CD8-positive, alpha-beta T cell (primary cell): ENCODE measurements at regions of chr1 and their contacts with region 1.

Region 1: GRCh38 chr1:236795035-236795756 is at the start of gene MTR:
- DNase-seq: peak; percentile 90 to 98 (median 95)
- ATAC-seq: peak; percentile 88
- H3K4me3 ChIP-seq: peak within 1 kb of the TSS; percentile 59 to 88
- H3K4me3 Mint-ChIP-seq: peak within 1 kb of the TSS; percentile 90
- H3K27ac ChIP-seq: peak within 1 kb of the TSS; percentile 95 to 97
- H3K27ac Mint-ChIP-seq: peak within 1 kb of the TSS; percentile 98
- H3K4me1 ChIP-seq: peaks cover 25% of the 10 kb centered on the region
- H3K4me1 Mint-ChIP-seq: peaks cover 46% of the 10 kb centered on the region
- H3K27me3 ChIP-seq: no peaks in the 10 kb centered on the region
- H3K27me3 Mint-ChIP-seq: peaks cover 2% of the 10 kb centered on the region
- CTCF ChIP-seq: no peak
- total RNA-seq, gene MTR: 32.9 to 35.0 TPM

Region 2: GRCh38 chr1:236281654-236282424 is 513.4 kb before region 1 on chr1 and contains the start of gene ERO1B:
- CTCF ChIA-PET with region 1: interaction called, 3 read pairs
- POLR2A ChIA-PET with region 1: interaction called, 3 read pairs
- intact Hi-C with region 1: loop called in 1 of 2 experiments (anchors 5 kb)
- DNase-seq: peak; percentile 96 to 99 (median 97)
- ATAC-seq: peak; percentile 93
- H3K4me3 ChIP-seq: peak within 1 kb of the TSS; percentile 75 to 90
- H3K4me3 Mint-ChIP-seq: peak within 1 kb of the TSS; percentile 97
- H3K27ac ChIP-seq: peak within 1 kb of the TSS; percentile 72 to 85
- H3K27ac Mint-ChIP-seq: peak within 1 kb of the TSS; percentile 92
- H3K4me1 ChIP-seq: peaks cover 28% of the 10 kb centered on the region
- H3K4me1 Mint-ChIP-seq: peaks cover 52% of the 10 kb centered on the region
- H3K27me3 ChIP-seq: no peaks in the 10 kb centered on the region
- H3K27me3 Mint-ChIP-seq: no peaks in the 10 kb centered on the region
- CTCF ChIP-seq: no peak
- total RNA-seq, gene ERO1B: 16.2 to 16.6 TPM

Region 3: DNA sequence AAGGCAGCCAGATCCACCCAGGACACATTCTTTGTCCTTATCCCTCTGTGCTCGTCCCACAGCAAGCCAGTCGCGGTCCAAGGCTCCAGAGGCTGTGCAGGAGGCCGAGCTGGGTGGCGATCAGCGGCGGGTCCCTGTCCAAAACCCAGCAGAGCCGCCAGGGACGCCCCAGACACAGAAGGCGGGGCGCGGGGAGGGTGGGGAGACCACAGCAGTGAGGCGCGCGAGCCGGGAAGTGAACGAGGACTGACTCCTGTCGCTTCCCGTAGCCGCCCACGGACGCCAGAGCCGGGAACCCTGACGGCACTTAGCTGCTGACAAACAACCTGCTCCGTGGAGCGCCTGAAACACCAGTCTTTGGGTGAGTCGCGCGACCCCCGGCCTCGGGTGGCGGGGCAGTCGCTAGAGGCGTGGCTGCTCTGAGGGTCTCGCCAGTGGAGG is 271.5 kb before region 1 on chr1 and contains the start of gene LGALS8:
- CTCF ChIA-PET with region 1: no interaction called
- POLR2A ChIA-PET with region 1: no interaction called
- intact Hi-C with region 1: loop called in 1 of 2 experiments (anchors 5 kb)
- DNase-seq: peak; percentile 65 to 93 (median 88)
- ATAC-seq: peak; percentile 80
- H3K4me3 ChIP-seq: peak within 1 kb of the TSS; percentile 78 to 95
- H3K4me3 Mint-ChIP-seq: peak within 1 kb of the TSS; percentile 92
- H3K27ac ChIP-seq: peak within 1 kb of the TSS; percentile 84 to 92
- H3K27ac Mint-ChIP-seq: peak within 1 kb of the TSS; percentile 93
- H3K4me1 ChIP-seq: peaks cover 11% of the 10 kb centered on the region
- H3K4me1 Mint-ChIP-seq: peaks cover 32% of the 10 kb centered on the region
- H3K27me3 ChIP-seq: no peaks in the 10 kb centered on the region
- H3K27me3 Mint-ChIP-seq: peaks cover 3% of the 10 kb centered on the region
- CTCF ChIP-seq: no peak
- total RNA-seq, gene LGALS8: 118 to 125 TPM

Region 4: DNA sequence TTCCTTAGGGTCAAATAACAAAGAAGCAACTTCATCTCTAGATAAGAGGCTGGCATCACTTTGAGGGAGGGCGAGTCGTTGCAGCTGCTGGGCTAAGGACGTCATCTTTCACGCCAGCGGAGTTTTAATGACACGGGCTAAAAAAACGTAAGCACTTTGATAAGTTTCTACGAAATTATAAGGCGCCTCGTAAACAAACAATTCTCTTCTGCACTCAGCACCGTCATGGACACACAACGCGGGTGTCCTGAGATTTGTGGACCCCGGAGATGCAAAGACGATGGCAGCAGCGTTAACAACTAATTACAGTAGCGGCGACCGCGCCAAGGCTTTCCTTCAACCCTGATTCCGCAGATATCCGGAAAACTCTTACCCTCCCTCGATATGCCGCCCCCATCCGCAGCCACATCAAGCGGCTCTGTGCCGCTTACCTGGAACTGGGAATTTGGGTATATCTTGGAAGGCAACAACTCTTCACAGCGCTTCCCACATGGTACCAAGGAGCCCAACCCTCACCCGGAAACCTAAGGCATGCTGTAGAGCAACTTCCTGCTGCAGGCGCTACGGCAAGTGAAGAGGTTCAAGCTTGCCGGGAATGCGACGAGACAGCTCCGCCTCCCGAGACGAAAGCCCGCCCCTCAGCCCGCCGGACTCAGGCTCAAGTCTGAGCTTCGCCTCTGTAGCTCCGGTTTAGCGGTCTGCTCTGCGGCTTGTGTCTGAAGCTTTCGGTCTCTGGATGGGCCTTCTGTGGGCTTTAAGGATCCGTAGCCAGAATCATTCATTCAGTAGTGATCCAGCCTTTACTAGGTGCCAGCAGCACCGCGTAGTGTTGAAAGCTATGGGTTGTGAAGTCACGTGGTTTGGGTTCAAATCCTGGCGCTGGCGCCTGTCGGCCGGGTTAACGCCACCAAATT is 190.9 kb before region 1 on chr1 and contains the start of gene HEATR1:
- CTCF ChIA-PET with region 1: no interaction called
- POLR2A ChIA-PET with region 1: interaction called, 8 read pairs
- intact Hi-C with region 1: loop called (anchors 1 to 5 kb)
- DNase-seq: peak; percentile 62 to 94 (median 82)
- ATAC-seq: peak; percentile 86
- H3K4me3 ChIP-seq: peak within 1 kb of the TSS; percentile 90 to 93
- H3K4me3 Mint-ChIP-seq: peak within 1 kb of the TSS; percentile 96
- H3K27ac ChIP-seq: peak within 1 kb of the TSS; percentile 65 to 77
- H3K27ac Mint-ChIP-seq: peak within 1 kb of the TSS; percentile 98
- H3K4me1 ChIP-seq: peaks cover 23% of the 10 kb centered on the region
- H3K4me1 Mint-ChIP-seq: peaks cover 39% of the 10 kb centered on the region
- H3K27me3 ChIP-seq: peaks cover 0 to 3% of the 10 kb centered on the region in 2 experiments
- H3K27me3 Mint-ChIP-seq: peaks cover 11% of the 10 kb centered on the region
- CTCF ChIP-seq: no peak
- total RNA-seq, gene HEATR1: 52.1 to 53.7 TPM

Region 5: GRCh38 chr1:236759252-236759859 is 35.8 kb before region 1 on chr1:
- CTCF ChIA-PET with region 1: interaction called, 10 read pairs
- POLR2A ChIA-PET with region 1: interaction called, 3 read pairs
- intact Hi-C with region 1: no loop called
- DNase-seq: peak in 3 of 9 experiments; percentile 11 to 68 (median 58)
- ATAC-seq: peak; percentile 31
- H3K4me3 ChIP-seq: no peak overlapping the region
- H3K4me3 Mint-ChIP-seq: no peak overlapping the region
- H3K27ac ChIP-seq: no peak overlapping the region
- H3K27ac Mint-ChIP-seq: no peak overlapping the region
- H3K4me1 ChIP-seq: no peaks in the 10 kb centered on the region
- H3K4me1 Mint-ChIP-seq: no peaks in the 10 kb centered on the region
- H3K27me3 ChIP-seq: no peaks in the 10 kb centered on the region
- H3K27me3 Mint-ChIP-seq: no peaks in the 10 kb centered on the region
- CTCF ChIP-seq: peak; percentile 78

Region 6: GRCh38 chr1:236808564-236809130 is 13.5 kb after region 1 on chr1:
- CTCF ChIA-PET with region 1: interaction called, 8 read pairs
- POLR2A ChIA-PET with region 1: interaction called, 12 read pairs
- intact Hi-C with region 1: no loop called
- DNase-seq: no peak
- ATAC-seq: no peak
- H3K4me3 ChIP-seq: no peak overlapping the region
- H3K4me3 Mint-ChIP-seq: no peak overlapping the region
- H3K27ac ChIP-seq: no peak overlapping the region
- H3K27ac Mint-ChIP-seq: no peak overlapping the region
- H3K4me1 ChIP-seq: no peaks in the 10 kb centered on the region
- H3K4me1 Mint-ChIP-seq: peaks cover 21% of the 10 kb centered on the region
- H3K27me3 ChIP-seq: no peaks in the 10 kb centered on the region
- H3K27me3 Mint-ChIP-seq: no peaks in the 10 kb centered on the region
- CTCF ChIP-seq: no peak

Region 7: DNA sequence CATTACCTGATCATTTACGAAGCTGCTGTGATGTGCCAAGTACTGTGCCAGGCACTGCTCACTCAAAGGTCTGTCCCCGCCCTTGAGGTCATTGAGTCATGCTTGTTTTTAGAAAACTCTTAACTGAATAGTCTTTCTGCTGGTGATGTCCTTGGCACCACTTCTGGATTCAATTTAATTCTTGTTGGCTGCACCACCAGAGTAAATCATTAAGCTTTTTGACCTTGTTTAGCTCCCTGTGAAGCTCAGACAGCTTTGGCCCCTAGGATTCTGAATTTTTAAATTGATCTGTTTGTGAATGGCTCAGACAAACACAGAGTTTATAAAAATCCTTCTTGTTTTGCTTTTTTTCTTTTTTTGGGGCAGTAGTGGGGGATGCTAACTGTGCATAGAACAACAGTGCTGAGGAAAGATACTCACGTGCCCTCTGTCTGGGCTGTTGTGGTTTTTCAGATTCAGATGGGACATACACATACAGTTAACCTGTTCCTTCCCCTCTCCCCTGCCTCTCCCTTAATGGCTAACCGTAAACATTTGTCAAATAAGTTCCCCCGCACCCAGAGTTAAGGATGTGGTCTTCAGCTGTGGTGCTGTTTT is 67.5 kb after region 1 on chr1:
- CTCF ChIA-PET with region 1: no interaction called
- POLR2A ChIA-PET with region 1: no interaction called
- intact Hi-C with region 1: loop called (anchors 5 kb)
- DNase-seq: peak in 2 of 9 experiments; percentile 5 to 39
- ATAC-seq: peak; percentile 78
- H3K4me3 ChIP-seq: no peak overlapping the region
- H3K4me3 Mint-ChIP-seq: peak overlapping the region; percentile 32
- H3K27ac ChIP-seq: no peak overlapping the region
- H3K27ac Mint-ChIP-seq: peak overlapping the region; percentile 88
- H3K4me1 ChIP-seq: peaks cover 27% of the 10 kb centered on the region
- H3K4me1 Mint-ChIP-seq: peaks cover 33% of the 10 kb centered on the region
- H3K27me3 ChIP-seq: no peaks in the 10 kb centered on the region
- H3K27me3 Mint-ChIP-seq: no peaks in the 10 kb centered on the region
- CTCF ChIP-seq: no peak